ENCODE measurements at regions of chr11 and their contacts with region 1.

Region 1: GRCh38 chr11:59574932-59575502 is 40.6 kb downstream of the OSBP start:
- DNase-seq: no peak
- ATAC-seq: peak in 1 of 4 donors; percentile 15
- H3K4me3 ChIP-seq: no peak overlapping the region
- H3K27ac ChIP-seq: peak overlapping the region; percentile 18
- H3K4me1 ChIP-seq: peaks cover 3% of the 10 kb centered on the region
- H3K27me3 ChIP-seq: no peaks in the 10 kb centered on the region
- CTCF ChIP-seq: no peak

Region 2: DNA sequence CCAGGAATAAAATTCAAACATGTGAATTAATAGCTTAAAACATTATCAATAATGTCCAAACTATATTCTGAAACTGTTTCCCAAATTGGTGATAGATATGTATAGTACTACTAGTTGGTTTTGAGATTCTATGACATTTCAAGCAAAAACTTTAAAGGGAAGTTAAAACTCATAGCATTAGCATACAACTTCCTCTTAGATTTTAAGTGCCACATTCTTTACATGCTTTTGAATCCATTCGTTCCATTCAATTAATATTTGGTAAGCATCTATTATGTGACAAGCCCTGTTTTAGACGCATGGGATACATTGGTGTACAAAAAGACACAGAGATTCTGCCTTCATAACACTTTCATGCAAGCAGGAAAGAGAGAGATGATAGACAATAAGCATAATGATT is 85.0 kb after region 1 on chr11:
- intact Hi-C with region 1: loop called in 1 of 2 experiments (anchors 5 kb)
- DNase-seq: no peak
- ATAC-seq: no peak
- H3K4me3 ChIP-seq: no peak overlapping the region
- H3K27ac ChIP-seq: no peak overlapping the region
- H3K4me1 ChIP-seq: peaks cover 29% of the 10 kb centered on the region
- H3K27me3 ChIP-seq: no peaks in the 10 kb centered on the region
- CTCF ChIP-seq: no peak